ENCODE measurements at regions of chr19 and their contacts with region 1.

Region 1: DNA sequence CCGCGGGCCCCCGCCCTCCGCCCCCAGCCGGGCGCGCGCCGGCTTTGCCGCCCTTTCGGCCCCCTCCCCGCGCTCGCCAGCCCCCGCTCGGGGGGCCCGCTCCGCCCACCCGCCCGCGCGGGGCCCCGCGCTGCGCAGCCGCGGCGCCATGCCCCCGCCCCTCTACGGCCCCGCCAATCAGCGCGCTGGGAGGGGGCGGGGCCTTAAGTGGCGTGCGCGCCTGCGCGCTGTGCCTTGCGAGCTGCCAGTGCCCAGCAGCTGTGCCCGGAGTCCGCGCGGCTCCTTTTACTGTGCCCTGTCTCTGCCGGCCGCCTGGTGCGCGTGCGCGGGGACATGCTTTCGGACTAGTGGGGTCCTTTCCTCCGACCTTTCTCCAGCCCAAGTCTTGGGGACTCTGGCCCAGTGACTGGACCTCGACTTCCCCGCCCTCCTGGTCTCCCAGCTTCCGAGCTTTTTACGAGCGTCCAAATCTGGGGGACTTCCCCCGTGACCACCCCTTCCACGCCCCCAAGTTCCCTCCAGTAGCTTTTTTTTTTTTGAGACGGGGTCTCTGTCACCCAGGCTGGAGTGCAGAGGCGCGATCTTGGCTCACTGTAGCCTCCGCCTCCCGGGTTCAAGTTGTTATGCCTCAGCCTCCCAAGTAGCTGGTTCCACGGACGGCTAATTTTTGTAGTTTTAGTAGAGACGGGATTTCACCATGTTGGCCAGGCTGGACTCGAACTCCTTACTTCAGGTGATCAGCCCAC is at the start of gene MBD3:
- DNase-seq: peak; percentile 81 to 93 (median 86)
- ATAC-seq: peak; percentile 78 to 79
- H3K4me3 Mint-ChIP-seq: peak within 1 kb of the TSS; percentile 85 to 93 (median 88)
- H3K27ac Mint-ChIP-seq: peak within 1 kb of the TSS; percentile 78 to 96 (median 93)
- H3K4me1 Mint-ChIP-seq: peaks cover 11 to 29% (median 20%) of the 10 kb centered on the region in 4 donors
- H3K27me3 Mint-ChIP-seq: no peaks in the 10 kb centered on the region
- polyA plus RNA-seq, gene MBD3: 9.6 to 23.5 (median 12.8) TPM

Region 2: GRCh38 chr19:1605236-1606137 is 12.6 kb after region 1 on chr19 and contains the start of gene UQCR11:
- POLR2A ChIA-PET with region 1: interaction called, 52 read pairs
- DNase-seq: peak; percentile 85 to 95 (median 88)
- ATAC-seq: peak; percentile 78 to 85
- H3K4me3 Mint-ChIP-seq: peak within 1 kb of the TSS; percentile 91 to 99 (median 98)
- H3K27ac Mint-ChIP-seq: peak within 1 kb of the TSS; percentile 94 to 100 (median 98)
- H3K4me1 Mint-ChIP-seq: peaks cover 21 to 68% (median 57%) of the 10 kb centered on the region in 4 donors
- H3K27me3 Mint-ChIP-seq: no peaks in the 10 kb centered on the region
- polyA plus RNA-seq, gene UQCR11: 545 to 646 (median 558) TPM

Region 3: GRCh38 chr19:1652471-1653299 is 59.8 kb after region 1 on chr19 and contains the start of gene TCF3:
- POLR2A ChIA-PET with region 1: interaction called, 37 read pairs
- DNase-seq: peak; percentile 96 to 100 (median 98)
- ATAC-seq: peak; percentile 86 to 88
- H3K4me3 Mint-ChIP-seq: peak within 1 kb of the TSS; percentile 87 to 97 (median 92)
- H3K27ac Mint-ChIP-seq: peak within 1 kb of the TSS; percentile 90 to 98 (median 97)
- H3K4me1 Mint-ChIP-seq: peaks cover 12 to 36% (median 15%) of the 10 kb centered on the region in 4 donors
- H3K27me3 Mint-ChIP-seq: no peaks in the 10 kb centered on the region
- polyA plus RNA-seq, gene TCF3: 7.8 to 33.0 (median 13.0) TPM

Measured in naive thymus-derived CD8-positive, alpha-beta T cell (primary cell).